ENCODE measurements at regions of chr5 and their contacts with region 1.

Region 1: GRCh38 chr5:17216176-17216973 is 1.1 kb upstream of the BASP1 start:
- DNase-seq: peak; percentile 69
- ATAC-seq: peak; percentile 41
- H3K4me3 Mint-ChIP-seq: peak overlapping the region; percentile 94
- H3K27ac Mint-ChIP-seq: peak overlapping the region; percentile 97
- H3K4me1 Mint-ChIP-seq: peaks cover 59% of the 10 kb centered on the region
- H3K27me3 Mint-ChIP-seq: no peaks in the 10 kb centered on the region
- CTCF ChIP-seq: peak; percentile 65

Region 2: DNA sequence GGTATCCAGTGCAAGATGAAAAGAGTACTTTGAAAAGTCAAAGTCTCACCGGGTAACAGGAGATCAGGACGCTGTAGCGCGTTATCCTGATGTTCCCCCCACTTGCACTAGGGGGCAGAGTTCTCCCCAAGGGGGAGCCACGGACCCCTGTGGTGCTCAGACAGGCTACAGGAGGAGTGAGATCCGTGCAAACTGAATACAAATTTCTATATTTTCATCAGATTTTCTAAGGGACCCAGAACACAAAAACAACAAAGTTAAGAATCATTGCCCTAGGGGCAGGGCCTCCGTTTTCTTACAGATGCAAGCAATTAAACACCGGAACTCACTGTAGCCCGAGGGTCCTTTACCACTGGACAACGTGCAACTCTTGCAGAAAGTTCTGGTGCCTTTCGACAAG is 282.3 kb before region 1 on chr5:
- CTCF ChIA-PET with region 1: no interaction called
- POLR2A ChIA-PET with region 1: no interaction called
- intact Hi-C with region 1: loop called (anchors 5 kb)
- DNase-seq: no peak
- ATAC-seq: no peak
- H3K4me3 Mint-ChIP-seq: peak overlapping the region; percentile 41
- H3K27ac Mint-ChIP-seq: no peak overlapping the region
- H3K4me1 Mint-ChIP-seq: peaks cover 23% of the 10 kb centered on the region
- H3K27me3 Mint-ChIP-seq: peaks cover 72% of the 10 kb centered on the region
- CTCF ChIP-seq: no peak

Region 3: DNA sequence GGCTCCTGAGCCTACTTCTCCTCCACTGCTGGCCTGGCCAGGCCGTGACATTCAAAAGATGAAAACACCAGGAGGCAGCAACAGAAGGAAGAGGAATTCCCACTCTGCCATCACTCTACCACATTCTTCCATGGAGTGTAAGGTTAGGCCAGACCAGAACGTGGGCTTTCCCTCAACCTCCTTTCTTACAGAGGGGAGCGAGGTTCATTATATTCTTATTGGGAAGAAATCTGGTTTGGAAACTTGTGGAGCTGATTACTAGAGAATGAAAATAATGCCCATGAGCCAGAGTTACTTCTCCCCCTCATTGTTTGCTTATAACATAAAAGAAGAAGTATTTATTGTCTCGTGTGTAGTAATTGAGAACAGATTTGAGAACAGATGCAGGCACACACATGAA is 135.2 kb before region 1 on chr5:
- CTCF ChIA-PET with region 1: no interaction called
- POLR2A ChIA-PET with region 1: no interaction called
- intact Hi-C with region 1: no loop called
- DNase-seq: no peak
- ATAC-seq: no peak
- H3K4me3 Mint-ChIP-seq: no peak overlapping the region
- H3K27ac Mint-ChIP-seq: no peak overlapping the region
- H3K4me1 Mint-ChIP-seq: no peaks in the 10 kb centered on the region
- H3K27me3 Mint-ChIP-seq: no peaks in the 10 kb centered on the region
- CTCF ChIP-seq: no peak

Region 4: GRCh38 chr5:17269201-17269600 is 52.8 kb after region 1 on chr5:
- CTCF ChIA-PET with region 1: interaction called, 6 read pairs
- POLR2A ChIA-PET with region 1: interaction called, 34 read pairs
- intact Hi-C with region 1: no loop called
- DNase-seq: no peak
- ATAC-seq: peak; percentile 73
- H3K4me3 Mint-ChIP-seq: peak overlapping the region; percentile 66
- H3K27ac Mint-ChIP-seq: peak overlapping the region; percentile 87
- H3K4me1 Mint-ChIP-seq: peaks cover 96% of the 10 kb centered on the region
- H3K27me3 Mint-ChIP-seq: no peaks in the 10 kb centered on the region
- CTCF ChIP-seq: no peak

Region 5: GRCh38 chr5:17302106-17302505 is 85.7 kb after region 1 on chr5:
- CTCF ChIA-PET with region 1: no interaction called
- POLR2A ChIA-PET with region 1: no interaction called
- intact Hi-C with region 1: no loop called
- DNase-seq: no peak
- ATAC-seq: no peak
- H3K4me3 Mint-ChIP-seq: no peak overlapping the region
- H3K27ac Mint-ChIP-seq: peak overlapping the region; percentile 3
- H3K4me1 Mint-ChIP-seq: no peaks in the 10 kb centered on the region
- H3K27me3 Mint-ChIP-seq: no peaks in the 10 kb centered on the region
- CTCF ChIP-seq: no peak

Region 6: DNA sequence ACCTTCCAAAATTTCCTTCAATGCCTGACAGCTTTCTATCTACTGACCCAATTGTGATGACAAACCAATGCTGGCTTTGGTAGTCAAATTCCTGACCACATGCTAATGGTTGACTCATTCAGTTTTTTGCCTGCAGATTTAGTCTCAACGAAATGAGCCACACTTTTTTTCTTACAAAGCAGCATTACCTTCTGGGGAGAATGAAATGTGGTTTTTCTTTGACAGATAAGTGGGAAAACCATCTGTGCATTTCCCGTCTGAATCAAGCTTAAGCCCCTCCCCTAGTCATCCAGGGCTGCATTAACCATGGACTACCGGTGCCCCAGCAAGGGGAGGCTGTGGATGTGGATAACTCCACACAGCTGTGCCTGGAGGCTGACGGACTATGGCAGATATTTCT is 182.1 kb after region 1 on chr5:
- CTCF ChIA-PET with region 1: no interaction called
- POLR2A ChIA-PET with region 1: interaction called, 3 read pairs
- intact Hi-C with region 1: loop called (anchors 1 kb)
- DNase-seq: no peak
- ATAC-seq: peak; percentile 64
- H3K4me3 Mint-ChIP-seq: peak overlapping the region; percentile 44
- H3K27ac Mint-ChIP-seq: peak overlapping the region; percentile 60
- H3K4me1 Mint-ChIP-seq: peaks cover 45% of the 10 kb centered on the region
- H3K27me3 Mint-ChIP-seq: no peaks in the 10 kb centered on the region
- CTCF ChIP-seq: no peak

Region 7: DNA sequence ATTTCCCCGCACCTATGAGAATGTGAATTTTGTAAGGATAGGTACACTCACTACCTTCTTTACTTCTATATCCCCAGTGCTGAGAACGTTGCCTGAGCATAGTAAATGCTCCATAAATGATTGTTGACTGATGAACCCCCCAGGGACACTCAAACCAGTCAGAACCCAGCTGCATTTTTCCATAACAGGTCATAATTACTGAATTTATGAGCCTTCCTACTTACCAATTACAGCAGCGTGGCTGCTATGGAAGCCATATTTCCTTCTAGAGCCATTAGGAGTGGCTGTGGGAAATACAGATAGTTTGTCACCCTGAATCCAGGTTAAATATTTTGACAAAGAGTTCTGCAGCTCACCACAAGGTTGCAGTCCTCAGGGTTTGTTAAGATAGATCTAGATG is 552.9 kb after region 1 on chr5:
- CTCF ChIA-PET with region 1: no interaction called
- POLR2A ChIA-PET with region 1: no interaction called
- intact Hi-C with region 1: loop called (anchors 2 kb)
- DNase-seq: no peak
- ATAC-seq: no peak
- H3K4me3 Mint-ChIP-seq: no peak overlapping the region
- H3K27ac Mint-ChIP-seq: no peak overlapping the region
- H3K4me1 Mint-ChIP-seq: no peaks in the 10 kb centered on the region
- H3K27me3 Mint-ChIP-seq: no peaks in the 10 kb centered on the region
- CTCF ChIP-seq: no peak

Region 8: DNA sequence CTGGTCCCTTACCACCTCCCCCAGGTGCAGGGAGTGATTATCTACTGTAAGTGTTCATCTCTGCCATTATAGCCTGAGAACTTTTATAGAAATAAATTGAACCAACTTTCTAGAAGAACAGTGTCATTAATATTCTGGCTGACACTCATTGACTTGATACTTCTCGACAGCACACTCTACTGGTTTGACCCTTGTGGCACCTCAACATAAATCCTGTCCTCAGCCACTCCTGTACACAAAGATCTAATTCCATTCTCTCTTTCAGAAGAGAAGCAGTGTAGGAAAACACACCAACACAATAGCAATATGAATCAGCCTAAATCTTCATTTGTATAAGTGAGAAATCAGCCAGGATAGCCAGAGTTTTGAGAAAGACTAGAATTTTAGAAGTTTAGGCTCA is 835.6 kb after region 1 on chr5:
- CTCF ChIA-PET with region 1: no interaction called
- POLR2A ChIA-PET with region 1: no interaction called
- intact Hi-C with region 1: loop called (anchors 2 kb)
- DNase-seq: no peak
- ATAC-seq: no peak
- H3K4me3 Mint-ChIP-seq: no peak overlapping the region
- H3K27ac Mint-ChIP-seq: no peak overlapping the region
- H3K4me1 Mint-ChIP-seq: no peaks in the 10 kb centered on the region
- H3K27me3 Mint-ChIP-seq: no peaks in the 10 kb centered on the region
- CTCF ChIP-seq: no peak

Region 9: DNA sequence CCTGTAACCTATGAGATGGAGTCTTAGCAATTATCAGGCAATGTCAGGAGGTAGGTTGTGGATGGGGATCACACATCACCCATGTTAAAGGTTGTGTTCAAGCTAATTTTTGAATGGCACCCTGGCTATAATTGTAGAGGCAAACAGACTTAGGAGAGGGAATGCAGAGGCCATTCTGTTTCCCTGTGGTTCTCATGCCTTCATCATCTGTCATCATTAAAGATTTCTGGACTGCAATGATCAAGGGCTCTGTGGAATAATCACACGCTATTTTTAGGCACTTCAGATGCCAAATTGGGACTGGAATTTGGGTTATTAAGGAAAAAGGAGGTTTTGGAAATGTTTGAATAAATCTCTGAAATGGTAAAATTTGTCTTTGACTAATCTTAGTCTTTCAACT is 1483.3 kb after region 1 on chr5:
- CTCF ChIA-PET with region 1: no interaction called
- POLR2A ChIA-PET with region 1: no interaction called
- intact Hi-C with region 1: loop called (anchors 2 kb)
- DNase-seq: no peak
- ATAC-seq: no peak
- H3K4me3 Mint-ChIP-seq: no peak overlapping the region
- H3K27ac Mint-ChIP-seq: no peak overlapping the region
- H3K4me1 Mint-ChIP-seq: peaks cover 31% of the 10 kb centered on the region
- H3K27me3 Mint-ChIP-seq: no peaks in the 10 kb centered on the region
- CTCF ChIP-seq: no peak

Measured in activated B cell treated with CpG ODN at 0.5 μM for 24 hours (primary cell).